Ascending aorta (tissue), 2 donors: ENCODE measurements at regions of chr10 and their contacts with region 1.

Region 1: GRCh38 chr10:77592946-77593636 is 44.5 kb downstream of the KCNMA1 start:
- DNase-seq: peak; percentile 76 to 90
- H3K4me3 ChIP-seq: no peak overlapping the region
- H3K27ac ChIP-seq: peak overlapping the region; percentile 86 to 96
- H3K4me1 ChIP-seq: peaks cover 12 to 60% of the 10 kb centered on the region in 2 donors
- H3K27me3 ChIP-seq: no peaks in the 10 kb centered on the region
- CTCF ChIP-seq: no peak

Region 2: DNA sequence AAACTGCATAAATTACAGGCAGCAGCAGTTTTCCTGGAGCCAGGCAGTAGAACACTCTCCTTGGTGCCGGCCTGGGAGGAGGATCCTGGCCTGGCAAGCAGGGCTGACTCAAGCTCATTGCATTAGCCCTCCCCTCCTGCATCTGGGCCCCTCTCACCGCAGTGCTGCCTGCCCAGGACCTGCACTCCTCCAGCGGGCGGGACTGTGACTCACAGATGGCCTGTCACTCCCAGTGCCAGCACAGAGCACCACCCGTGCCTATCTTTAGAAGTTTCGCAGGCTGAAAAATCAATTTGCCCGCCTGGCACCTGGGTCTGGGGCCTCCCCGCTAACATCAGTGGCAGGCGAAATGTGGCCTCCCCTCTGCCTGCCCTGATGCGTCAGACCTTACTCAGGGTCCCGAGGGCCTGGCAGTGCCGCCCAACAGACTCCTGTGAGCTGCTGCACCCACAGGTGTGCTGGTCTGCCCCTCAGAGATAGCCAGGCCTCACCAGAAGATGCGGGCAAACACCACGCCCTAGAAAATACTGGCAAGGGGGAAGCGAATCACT is 79.2 kb before region 1 on chr10:
- intact Hi-C with region 1: loop called (anchors 5 kb)
- DNase-seq: peak; percentile 70 to 94
- H3K4me3 ChIP-seq: no peak overlapping the region
- H3K27ac ChIP-seq: peak overlapping the region; percentile 82 to 86
- H3K4me1 ChIP-seq: peaks cover 6 to 36% of the 10 kb centered on the region in 2 donors
- H3K27me3 ChIP-seq: no peaks in the 10 kb centered on the region
- CTCF ChIP-seq: no peak